GM10248 (cell line): ENCODE measurements at regions of chr1 and their contacts with region 1.

Region 1: GRCh38 chr1:209860293-209860881 is 32.6 kb downstream of the UTP25 start:
- DNase-seq: peak; percentile 79
- CTCF ChIP-seq: peak; percentile 88

Region 2: GRCh38 chr1:209839875-209840491 is 20.4 kb before region 1 on chr1:
- CTCF ChIA-PET with region 1: interaction called, 15 read pairs
- POLR2A ChIA-PET with region 1: no interaction called
- DNase-seq: no peak
- CTCF ChIP-seq: no peak

Region 3: GRCh38 chr1:209989525-209989924 is 129.1 kb after region 1 on chr1:
- CTCF ChIA-PET with region 1: interaction called, 12 read pairs
- POLR2A ChIA-PET with region 1: no interaction called
- DNase-seq: peak; percentile 10
- CTCF ChIP-seq: no peak